CD4-positive, alpha-beta T cell (primary cell): ENCODE measurements at regions of chr7 and their contacts with region 1.

Region 1: DNA sequence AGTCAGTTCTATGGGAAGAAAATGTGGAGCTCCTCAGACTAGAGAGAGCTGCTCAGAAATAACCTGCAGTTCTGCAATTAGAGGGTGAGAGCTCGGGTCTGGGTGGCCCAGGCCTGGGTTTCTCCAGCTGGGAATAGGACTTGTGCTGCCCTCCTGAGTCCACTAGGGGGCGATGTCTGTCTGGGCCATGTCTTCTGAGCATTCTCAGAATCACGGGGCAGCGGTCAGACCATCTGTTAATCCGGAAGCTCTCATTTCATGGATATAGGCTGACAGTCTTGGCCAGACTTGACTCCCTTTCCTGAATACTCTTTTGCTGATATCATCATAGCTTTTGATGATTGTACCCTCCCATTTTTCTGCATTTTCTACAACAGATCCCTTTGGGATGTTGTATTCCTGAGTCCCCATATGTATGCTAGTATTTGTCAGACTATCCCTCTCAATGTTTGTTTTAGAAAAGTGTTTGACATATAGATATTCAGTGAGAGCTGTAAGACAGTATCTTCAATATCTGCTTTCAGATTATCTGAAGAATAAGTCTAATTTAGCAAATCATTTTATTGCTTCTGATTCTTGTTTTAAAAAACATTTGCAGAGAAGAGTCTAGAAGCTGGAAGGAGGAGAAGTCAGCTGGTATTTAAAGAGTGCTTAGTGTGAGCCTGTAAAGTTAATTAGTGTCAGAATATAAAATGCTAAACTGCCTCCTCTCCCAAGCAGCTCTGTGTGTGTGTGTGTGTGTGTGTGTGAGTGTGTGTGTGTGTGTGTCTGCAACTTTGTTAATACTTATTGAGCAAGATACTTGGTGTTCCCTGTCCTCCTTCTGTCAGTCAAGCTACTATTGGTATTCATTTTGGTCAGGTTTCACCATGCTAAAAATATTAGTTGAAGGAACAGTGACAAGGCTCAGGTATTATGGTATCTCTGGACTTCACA is 38.0 kb downstream of the STARD3NL start:
- DNase-seq: peak; percentile 59 to 90 (median 64)
- ATAC-seq: peak; percentile 92
- H3K4me3 ChIP-seq: no peak overlapping the region
- H3K4me3 Mint-ChIP-seq: no peak overlapping the region
- H3K27ac ChIP-seq: peak overlapping the region in 1 of 2 donors; percentile 42
- H3K27ac Mint-ChIP-seq: peak overlapping the region; percentile 54
- H3K4me1 ChIP-seq: peaks cover 30% of the 10 kb centered on the region
- H3K4me1 Mint-ChIP-seq: peaks cover 25% of the 10 kb centered on the region
- H3K27me3 ChIP-seq: no peaks in the 10 kb centered on the region
- H3K27me3 Mint-ChIP-seq: no peaks in the 10 kb centered on the region
- CTCF ChIP-seq: peak; percentile 95

Region 2: DNA sequence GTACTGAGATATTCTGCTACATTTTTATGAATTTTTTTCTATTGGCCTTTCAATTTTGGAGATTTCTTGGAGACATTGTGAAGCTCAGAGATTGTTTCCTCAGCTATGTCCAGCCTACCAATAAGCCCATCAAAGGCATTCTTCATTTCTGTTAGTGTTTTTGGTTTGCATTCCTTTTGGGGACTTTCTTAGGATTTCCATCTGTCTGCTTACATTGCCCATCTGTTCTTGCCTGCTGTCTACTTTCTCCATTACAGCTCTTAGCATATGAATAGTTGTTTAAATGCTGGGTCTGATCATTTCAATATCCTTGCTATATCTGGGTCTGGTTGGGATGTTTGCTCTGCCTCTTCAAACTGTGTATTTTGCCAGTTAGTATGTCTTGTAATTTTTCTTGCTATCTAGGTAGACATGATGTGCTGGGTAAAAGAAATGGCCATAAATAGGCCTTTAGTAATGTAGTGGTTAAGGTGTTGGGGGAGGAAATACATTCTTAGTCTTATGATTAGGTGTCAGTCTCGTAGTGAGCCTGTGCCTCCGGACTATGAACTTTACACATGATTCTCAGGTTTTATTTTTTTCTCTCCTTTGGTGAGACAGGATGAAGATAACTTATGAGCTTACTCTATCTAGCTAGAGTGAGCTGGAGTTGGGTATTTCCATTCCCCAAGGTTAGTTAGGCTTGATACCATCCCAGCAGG is 400.2 kb before region 1 on chr7:
- CTCF ChIA-PET with region 1: no interaction called
- POLR2A ChIA-PET with region 1: no interaction called
- intact Hi-C with region 1: no loop called
- DNase-seq: no peak
- ATAC-seq: no peak
- H3K4me3 ChIP-seq: no peak overlapping the region
- H3K4me3 Mint-ChIP-seq: no peak overlapping the region
- H3K27ac ChIP-seq: no peak overlapping the region
- H3K27ac Mint-ChIP-seq: no peak overlapping the region
- H3K4me1 ChIP-seq: no peaks in the 10 kb centered on the region
- H3K4me1 Mint-ChIP-seq: no peaks in the 10 kb centered on the region
- H3K27me3 ChIP-seq: no peaks in the 10 kb centered on the region
- H3K27me3 Mint-ChIP-seq: no peaks in the 10 kb centered on the region
- CTCF ChIP-seq: no peak

Region 3: DNA sequence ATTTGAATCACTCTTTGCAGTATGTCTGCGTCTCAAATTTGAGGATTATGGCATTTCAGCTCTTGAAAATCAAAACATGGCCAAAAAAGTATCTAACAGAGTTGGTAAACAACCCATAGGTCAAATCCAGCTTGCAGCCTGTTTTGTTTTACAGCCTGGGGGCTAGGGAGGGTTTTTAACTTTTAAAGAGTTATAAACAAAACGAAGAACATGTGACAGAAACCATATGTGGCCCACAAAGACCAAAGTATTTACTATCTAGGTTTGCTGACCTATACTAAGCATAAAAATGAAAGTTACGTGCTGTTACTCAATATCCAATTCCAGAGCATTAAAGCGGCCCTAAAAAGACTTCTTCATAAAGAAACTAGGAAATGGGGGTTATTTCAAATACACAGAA is 93.5 kb before region 1 on chr7:
- CTCF ChIA-PET with region 1: no interaction called
- POLR2A ChIA-PET with region 1: no interaction called
- intact Hi-C with region 1: no loop called
- DNase-seq: no peak
- ATAC-seq: no peak
- H3K4me3 ChIP-seq: no peak overlapping the region
- H3K4me3 Mint-ChIP-seq: no peak overlapping the region
- H3K27ac ChIP-seq: no peak overlapping the region
- H3K27ac Mint-ChIP-seq: no peak overlapping the region
- H3K4me1 ChIP-seq: no peaks in the 10 kb centered on the region
- H3K4me1 Mint-ChIP-seq: no peaks in the 10 kb centered on the region
- H3K27me3 ChIP-seq: no peaks in the 10 kb centered on the region
- H3K27me3 Mint-ChIP-seq: peaks cover 21% of the 10 kb centered on the region
- CTCF ChIP-seq: no peak

Region 4: GRCh38 chr7:38160003-38160571 is 55.9 kb before region 1 on chr7:
- CTCF ChIA-PET with region 1: no interaction called
- POLR2A ChIA-PET with region 1: no interaction called
- intact Hi-C with region 1: no loop called
- DNase-seq: no peak
- ATAC-seq: no peak
- H3K4me3 ChIP-seq: no peak overlapping the region
- H3K4me3 Mint-ChIP-seq: no peak overlapping the region
- H3K27ac ChIP-seq: no peak overlapping the region
- H3K27ac Mint-ChIP-seq: no peak overlapping the region
- H3K4me1 ChIP-seq: no peaks in the 10 kb centered on the region
- H3K4me1 Mint-ChIP-seq: no peaks in the 10 kb centered on the region
- H3K27me3 ChIP-seq: no peaks in the 10 kb centered on the region
- H3K27me3 Mint-ChIP-seq: peaks cover 16% of the 10 kb centered on the region
- CTCF ChIP-seq: no peak

Region 5: GRCh38 chr7:38178004-38178694 is 37.9 kb before region 1 on chr7 and contains the start of gene STARD3NL:
- CTCF ChIA-PET with region 1: interaction called, 13 read pairs
- POLR2A ChIA-PET with region 1: no interaction called
- intact Hi-C with region 1: loop called in 1 of 2 experiments (anchors 5 kb)
- DNase-seq: peak; percentile 69 to 98 (median 84)
- ATAC-seq: peak; percentile 94
- H3K4me3 ChIP-seq: peak within 1 kb of the TSS; percentile 88
- H3K4me3 Mint-ChIP-seq: peak within 1 kb of the TSS; percentile 98
- H3K27ac ChIP-seq: peak within 1 kb of the TSS; percentile 82 to 85
- H3K27ac Mint-ChIP-seq: peak within 1 kb of the TSS; percentile 91
- H3K4me1 ChIP-seq: peaks cover 4% of the 10 kb centered on the region
- H3K4me1 Mint-ChIP-seq: peaks cover 40% of the 10 kb centered on the region
- H3K27me3 ChIP-seq: no peaks in the 10 kb centered on the region
- H3K27me3 Mint-ChIP-seq: peaks cover 14% of the 10 kb centered on the region
- CTCF ChIP-seq: no peak
- total RNA-seq, gene STARD3NL: 14.4 to 15.7 TPM

Region 6: DNA sequence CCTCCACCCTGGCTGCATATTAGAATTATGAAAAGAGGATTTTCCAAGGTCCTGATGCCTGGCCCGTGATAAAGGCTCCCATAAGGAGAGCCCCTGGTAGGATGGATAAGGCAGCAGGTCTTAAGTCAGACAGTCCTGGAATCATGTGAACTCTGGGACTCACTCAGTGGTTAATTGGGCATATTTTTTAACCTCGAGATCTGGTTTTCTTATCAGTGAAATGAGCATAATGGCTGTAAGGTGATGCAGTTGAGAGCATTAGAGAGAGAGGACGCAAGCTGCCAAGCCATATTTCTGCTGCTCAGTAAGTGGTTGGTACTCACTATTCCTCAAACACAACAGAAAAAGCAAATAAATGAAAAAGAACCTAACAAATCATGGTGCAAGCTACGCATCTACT is 19.6 kb after region 1 on chr7:
- CTCF ChIA-PET with region 1: interaction called, 14 read pairs
- POLR2A ChIA-PET with region 1: interaction called, 5 read pairs
- intact Hi-C with region 1: no loop called
- DNase-seq: no peak
- ATAC-seq: no peak
- H3K4me3 ChIP-seq: no peak overlapping the region
- H3K4me3 Mint-ChIP-seq: no peak overlapping the region
- H3K27ac ChIP-seq: no peak overlapping the region
- H3K27ac Mint-ChIP-seq: peak overlapping the region; percentile 33
- H3K4me1 ChIP-seq: peaks cover 51% of the 10 kb centered on the region
- H3K4me1 Mint-ChIP-seq: peaks cover 55% of the 10 kb centered on the region
- H3K27me3 ChIP-seq: no peaks in the 10 kb centered on the region
- H3K27me3 Mint-ChIP-seq: no peaks in the 10 kb centered on the region
- CTCF ChIP-seq: no peak

Region 7: DNA sequence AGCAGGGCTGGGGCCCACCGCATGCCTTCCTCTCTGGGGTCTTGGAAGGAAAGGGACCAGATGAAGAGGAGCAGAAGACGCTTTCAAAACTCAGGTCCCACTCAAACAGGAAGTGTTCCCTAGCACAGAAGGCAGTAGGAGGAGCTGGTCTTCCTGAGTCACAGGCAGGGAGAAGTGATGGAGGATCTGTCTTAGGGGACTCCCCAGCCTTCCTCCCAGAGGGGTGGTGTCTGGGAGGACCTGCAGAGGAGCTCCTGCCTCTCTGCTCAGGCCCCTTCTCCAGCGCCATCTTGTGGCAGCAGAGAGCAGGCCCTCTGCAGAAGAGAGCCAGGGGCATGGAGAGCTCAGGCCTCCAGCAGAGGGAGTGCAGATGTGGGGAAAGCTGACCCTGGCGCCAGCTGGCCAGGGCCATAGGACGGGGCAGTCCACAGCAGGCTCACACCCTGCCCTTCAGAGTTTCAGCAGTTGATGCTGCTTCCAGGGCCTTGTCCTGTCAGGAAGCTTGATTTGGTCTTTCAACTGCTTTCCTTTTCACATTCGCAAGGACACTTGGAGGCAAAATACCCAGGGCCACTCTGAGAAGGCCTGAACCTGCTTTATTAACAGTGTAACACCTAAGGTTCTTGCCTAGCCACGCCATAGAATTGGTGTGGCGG is 119.6 kb after region 1 on chr7:
- CTCF ChIA-PET with region 1: interaction called, 34 read pairs
- POLR2A ChIA-PET with region 1: interaction called, 11 read pairs
- intact Hi-C with region 1: loop called in 1 of 2 experiments (anchors 5 kb)
- DNase-seq: peak; percentile 59 to 92 (median 73)
- ATAC-seq: peak; percentile 93
- H3K4me3 ChIP-seq: peak overlapping the region; percentile 45
- H3K4me3 Mint-ChIP-seq: peak overlapping the region; percentile 78
- H3K27ac ChIP-seq: no peak overlapping the region
- H3K27ac Mint-ChIP-seq: peak overlapping the region; percentile 84
- H3K4me1 ChIP-seq: peaks cover 33% of the 10 kb centered on the region
- H3K4me1 Mint-ChIP-seq: peaks cover 44% of the 10 kb centered on the region
- H3K27me3 ChIP-seq: no peaks in the 10 kb centered on the region
- H3K27me3 Mint-ChIP-seq: no peaks in the 10 kb centered on the region
- CTCF ChIP-seq: peak; percentile 74

Region 8: DNA sequence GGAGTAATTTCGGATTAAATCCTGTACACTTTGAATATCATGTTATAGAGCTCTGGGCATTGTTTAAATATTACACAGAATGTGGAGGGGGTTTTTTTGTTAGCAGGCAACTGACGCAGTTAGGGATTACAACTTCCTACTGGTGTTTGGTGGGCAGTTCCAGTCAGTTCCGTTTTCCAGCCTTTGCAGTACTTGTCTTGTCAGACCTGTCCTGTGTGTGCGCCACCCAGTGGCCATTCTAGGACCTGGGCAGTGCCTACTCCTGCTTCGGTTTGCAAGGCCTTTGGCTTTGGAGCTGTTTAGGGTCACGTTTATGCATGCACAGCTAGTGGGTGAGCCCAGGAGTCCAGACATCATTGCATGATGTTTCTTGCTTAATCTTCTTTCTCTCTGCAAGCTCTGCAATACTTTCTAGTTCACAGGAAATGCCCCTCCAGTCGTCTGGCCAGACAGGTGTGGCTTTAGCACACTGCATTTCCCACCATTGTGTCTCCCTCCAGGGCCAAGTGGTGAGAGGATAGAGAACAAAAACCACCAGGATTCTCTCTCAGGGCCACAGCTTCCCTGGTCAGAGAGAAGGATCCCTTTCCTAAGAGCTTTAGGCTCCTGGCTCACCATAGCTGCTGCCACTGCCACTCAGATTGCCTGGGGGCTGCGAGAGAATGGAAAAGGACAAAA is 154.0 kb after region 1 on chr7:
- CTCF ChIA-PET with region 1: interaction called, 113 read pairs
- POLR2A ChIA-PET with region 1: interaction called, 12 read pairs
- intact Hi-C with region 1: loop called (anchors 1 to 2 kb)
- DNase-seq: peak; percentile 53 to 89 (median 76)
- ATAC-seq: peak; percentile 60
- H3K4me3 ChIP-seq: no peak overlapping the region
- H3K4me3 Mint-ChIP-seq: peak overlapping the region; percentile 59
- H3K27ac ChIP-seq: peak overlapping the region in 1 of 2 donors; percentile 52
- H3K27ac Mint-ChIP-seq: peak overlapping the region; percentile 85
- H3K4me1 ChIP-seq: peaks cover 41% of the 10 kb centered on the region
- H3K4me1 Mint-ChIP-seq: peaks cover 72% of the 10 kb centered on the region
- H3K27me3 ChIP-seq: no peaks in the 10 kb centered on the region
- H3K27me3 Mint-ChIP-seq: no peaks in the 10 kb centered on the region
- CTCF ChIP-seq: peak; percentile 85